ENCODE measurements at regions of chr5 and their contacts with region 1.

Region 1: DNA sequence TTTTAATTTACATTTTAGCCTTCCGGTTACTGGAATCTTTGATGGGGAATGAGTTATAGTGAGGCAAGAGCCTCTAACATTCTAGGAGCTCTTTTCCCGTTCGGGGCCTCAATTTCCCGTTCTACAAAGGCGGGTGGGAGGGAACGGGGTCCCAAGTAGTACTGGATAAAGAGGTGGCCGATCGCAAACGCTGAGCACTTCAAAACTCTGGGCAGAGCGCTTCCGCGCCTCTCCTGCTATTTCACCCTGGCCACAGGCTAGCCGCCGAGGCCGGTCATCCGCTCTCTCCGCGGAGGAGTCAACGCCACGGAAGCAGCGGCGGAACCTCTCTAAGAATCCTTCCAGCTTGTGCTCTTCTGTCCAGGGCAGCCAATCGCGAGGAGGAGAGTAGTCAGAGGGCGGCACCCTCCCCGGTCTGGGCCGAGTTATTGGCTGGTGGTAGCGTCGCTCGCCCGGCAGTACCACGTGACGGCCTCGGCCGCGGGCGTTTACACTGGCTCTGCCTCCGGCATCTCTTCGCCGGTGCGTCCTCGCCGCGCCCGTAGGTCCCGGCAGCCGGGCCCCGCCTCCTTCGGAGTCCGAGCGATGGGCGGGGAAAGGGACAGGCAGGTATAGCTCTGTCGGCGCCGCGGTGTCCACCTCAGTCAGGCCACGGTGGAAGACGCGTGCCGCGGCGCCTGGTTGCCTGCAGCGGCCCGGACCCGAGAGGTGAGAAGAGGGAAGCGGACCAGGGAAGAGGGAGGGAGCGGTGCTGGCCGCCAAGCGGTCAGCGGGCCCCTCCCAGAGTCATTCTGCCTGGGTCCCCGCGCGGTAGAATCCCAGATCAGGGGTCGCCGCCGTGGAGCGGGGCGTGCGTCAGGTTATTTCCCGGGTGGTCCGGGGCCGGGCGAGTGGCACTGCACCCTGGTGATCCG is at the start of gene SLC26A2:
- DNase-seq: peak; percentile 96 to 98 (median 98)
- H3K4me3 ChIP-seq: peak within 1 kb of the TSS; percentile 60 to 77 (median 77)
- H3K4me3 Mint-ChIP-seq: peak within 1 kb of the TSS; percentile 89 to 94
- H3K27ac ChIP-seq: peak within 1 kb of the TSS; percentile 93
- H3K27ac Mint-ChIP-seq: peak within 1 kb of the TSS; percentile 96 to 99 (median 97)
- H3K4me1 ChIP-seq: peaks cover 18 to 29% of the 10 kb centered on the region in 2 donors
- H3K4me1 Mint-ChIP-seq: peaks cover 31% of the 10 kb centered on the region
- H3K27me3 ChIP-seq: no peaks in the 10 kb centered on the region
- H3K27me3 Mint-ChIP-seq: peaks cover 0 to 1% (median 0%) of the 10 kb centered on the region in 3 donors
- CTCF ChIP-seq: no peak
- polyA plus RNA-seq, gene SLC26A2: 1.9 to 3.6 (median 3.1) TPM

Region 2: GRCh38 chr5:149924486-149924885 is 36.0 kb before region 1 on chr5:
- intact Hi-C with region 1: no loop called
- DNase-seq: no peak
- H3K4me3 ChIP-seq: no peak overlapping the region
- H3K4me3 Mint-ChIP-seq: no peak overlapping the region
- H3K27ac ChIP-seq: no peak overlapping the region
- H3K27ac Mint-ChIP-seq: no peak overlapping the region
- H3K4me1 ChIP-seq: no peaks in the 10 kb centered on the region
- H3K4me1 Mint-ChIP-seq: no peaks in the 10 kb centered on the region
- H3K27me3 ChIP-seq: no peaks in the 10 kb centered on the region
- H3K27me3 Mint-ChIP-seq: peaks cover 0 to 4% (median 1%) of the 10 kb centered on the region in 3 donors
- CTCF ChIP-seq: no peak

Region 3: GRCh38 chr5:149940077-149940574 is 20.4 kb before region 1 on chr5:
- intact Hi-C with region 1: loop called in 1 of 2 experiments (anchors 2 kb)
- DNase-seq: peak; percentile 71 to 90 (median 88)
- H3K4me3 ChIP-seq: peak overlapping the region in 1 of 3 experiments; percentile 33
- H3K4me3 Mint-ChIP-seq: peak overlapping the region; percentile 14 to 70
- H3K27ac ChIP-seq: peak overlapping the region; percentile 25 to 92
- H3K27ac Mint-ChIP-seq: peak overlapping the region; percentile 94 to 98 (median 96)
- H3K4me1 ChIP-seq: peaks cover 45 to 46% of the 10 kb centered on the region in 2 donors
- H3K4me1 Mint-ChIP-seq: peaks cover 62% of the 10 kb centered on the region
- H3K27me3 ChIP-seq: no peaks in the 10 kb centered on the region
- H3K27me3 Mint-ChIP-seq: peaks cover 0 to 3% (median 0%) of the 10 kb centered on the region in 3 donors
- CTCF ChIP-seq: no peak

Region 4: GRCh38 chr5:150000256-150000989 is 39.9 kb after region 1 on chr5 and contains the starts of genes HMGXB3 and TIGD6:
- intact Hi-C with region 1: loop called in 1 of 2 experiments (anchors 5 kb)
- DNase-seq: peak; percentile 85 to 86 (median 86)
- H3K4me3 ChIP-seq: peak within 1 kb of the TSS; percentile 63 to 80 (median 66)
- H3K4me3 Mint-ChIP-seq: peak within 1 kb of the TSS; percentile 88 to 96
- H3K27ac ChIP-seq: peak within 1 kb of the TSS; percentile 86 to 88
- H3K27ac Mint-ChIP-seq: peak within 1 kb of the TSS; percentile 88 to 96 (median 94)
- H3K4me1 ChIP-seq: peaks cover 21 to 23% of the 10 kb centered on the region in 2 donors
- H3K4me1 Mint-ChIP-seq: peaks cover 31% of the 10 kb centered on the region
- H3K27me3 ChIP-seq: no peaks in the 10 kb centered on the region
- H3K27me3 Mint-ChIP-seq: no peaks in the 10 kb centered on the region
- CTCF ChIP-seq: no peak
- polyA plus RNA-seq, gene HMGXB3: 3.1 to 22.9 (median 6.2) TPM
- polyA plus RNA-seq, gene TIGD6: 0.88 to 2.5 (median 1.8) TPM